ENCODE measurements at regions of chr4 and their contacts with region 1.

Region 1: GRCh38 chr4:108570993-108571569 is 49.3 kb upstream of the RPL34 start:
- DNase-seq: no peak
- ATAC-seq: no peak
- H3K4me3 ChIP-seq: no peak overlapping the region
- H3K4me3 Mint-ChIP-seq: no peak overlapping the region
- H3K27ac ChIP-seq: no peak overlapping the region
- H3K27ac Mint-ChIP-seq: peak overlapping the region in 5 of 9 donors; percentile 0 to 74 (median 28)
- H3K4me1 ChIP-seq: peaks cover 0 to 11% of the 10 kb centered on the region in 2 donors
- H3K4me1 Mint-ChIP-seq: peaks cover 13 to 44% (median 32%) of the 10 kb centered on the region in 7 donors
- H3K27me3 ChIP-seq: no peaks in the 10 kb centered on the region
- H3K27me3 Mint-ChIP-seq: no peaks in the 10 kb centered on the region

Region 2: DNA sequence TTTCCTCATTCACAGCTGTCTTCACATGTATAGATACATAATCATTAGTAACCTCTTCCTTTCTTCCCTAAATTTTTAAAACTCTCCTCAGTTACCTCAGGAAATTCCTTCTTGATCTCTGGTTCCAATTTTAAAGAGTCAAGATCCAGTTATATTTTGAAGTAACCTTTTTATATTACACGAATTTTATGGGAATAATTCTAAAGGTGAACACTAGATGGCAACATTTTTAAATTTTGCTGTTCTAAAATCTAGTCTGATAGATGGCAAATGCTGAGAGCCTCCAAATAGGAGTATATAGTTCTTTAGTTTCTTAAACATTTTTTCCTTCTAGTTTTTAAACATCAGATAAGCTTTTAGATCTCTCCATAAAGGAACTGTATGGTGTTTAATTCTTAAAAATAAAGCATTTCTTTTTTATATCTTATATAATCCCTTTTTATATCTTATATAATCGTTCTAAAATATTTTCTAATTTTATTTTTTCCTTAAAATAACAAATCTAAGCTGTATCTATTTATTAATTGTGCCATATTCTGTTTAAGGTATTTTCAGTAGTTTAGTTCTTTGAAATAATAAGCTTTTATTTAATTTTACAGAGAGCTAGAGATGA is 813.1 kb before region 1 on chr4:
- CTCF ChIA-PET with region 1: no interaction called
- POLR2A ChIA-PET with region 1: no interaction called
- intact Hi-C with region 1: loop called in 1 of 2 experiments (anchors 2 kb)
- DNase-seq: peak in 5 of 9 donors; percentile 14 to 40 (median 23)
- ATAC-seq: peak; percentile 56
- H3K4me3 ChIP-seq: no peak overlapping the region
- H3K4me3 Mint-ChIP-seq: no peak overlapping the region
- H3K27ac ChIP-seq: no peak overlapping the region
- H3K27ac Mint-ChIP-seq: no peak overlapping the region
- H3K4me1 ChIP-seq: no peaks in the 10 kb centered on the region
- H3K4me1 Mint-ChIP-seq: peaks cover 0 to 5% (median 0%) of the 10 kb centered on the region in 7 donors
- H3K27me3 ChIP-seq: no peaks in the 10 kb centered on the region
- H3K27me3 Mint-ChIP-seq: peaks cover under 1 to 15% (median 10%) of the 10 kb centered on the region in 5 donors

Region 3: DNA sequence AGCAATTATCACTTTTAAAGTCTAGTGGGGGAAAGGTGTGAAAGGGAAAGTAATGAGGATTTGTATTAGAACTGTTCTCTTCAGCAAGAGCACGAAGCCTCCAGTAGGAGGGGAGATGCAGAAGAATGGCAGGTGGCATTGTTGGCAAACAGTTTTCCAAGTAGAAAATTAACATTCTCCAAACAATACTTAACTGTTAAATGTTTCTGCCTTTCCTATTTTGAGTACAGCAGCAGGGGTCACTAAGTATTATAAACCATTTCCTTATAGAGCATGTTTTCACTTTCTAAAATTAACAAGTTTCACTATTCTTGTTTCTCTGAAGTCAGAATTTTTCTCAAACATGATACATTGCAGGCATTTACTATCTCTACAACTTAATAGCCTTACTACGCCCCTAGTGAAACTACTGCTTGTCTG is 461.1 kb before region 1 on chr4:
- CTCF ChIA-PET with region 1: interaction called, 3 read pairs
- POLR2A ChIA-PET with region 1: no interaction called
- intact Hi-C with region 1: loop called in 1 of 2 experiments (anchors 2 kb)
- DNase-seq: no peak
- ATAC-seq: no peak
- H3K4me3 ChIP-seq: peak overlapping the region; percentile 7
- H3K4me3 Mint-ChIP-seq: peak overlapping the region; percentile 69 to 89 (median 78)
- H3K27ac ChIP-seq: peak overlapping the region; percentile 80
- H3K27ac Mint-ChIP-seq: peak overlapping the region; percentile 84 to 98 (median 90)
- H3K4me1 ChIP-seq: peaks cover 72 to 98% of the 10 kb centered on the region in 2 donors
- H3K4me1 Mint-ChIP-seq: peaks cover 70 to 97% (median 95%) of the 10 kb centered on the region in 7 donors
- H3K27me3 ChIP-seq: no peaks in the 10 kb centered on the region
- H3K27me3 Mint-ChIP-seq: no peaks in the 10 kb centered on the region

Region 4: DNA sequence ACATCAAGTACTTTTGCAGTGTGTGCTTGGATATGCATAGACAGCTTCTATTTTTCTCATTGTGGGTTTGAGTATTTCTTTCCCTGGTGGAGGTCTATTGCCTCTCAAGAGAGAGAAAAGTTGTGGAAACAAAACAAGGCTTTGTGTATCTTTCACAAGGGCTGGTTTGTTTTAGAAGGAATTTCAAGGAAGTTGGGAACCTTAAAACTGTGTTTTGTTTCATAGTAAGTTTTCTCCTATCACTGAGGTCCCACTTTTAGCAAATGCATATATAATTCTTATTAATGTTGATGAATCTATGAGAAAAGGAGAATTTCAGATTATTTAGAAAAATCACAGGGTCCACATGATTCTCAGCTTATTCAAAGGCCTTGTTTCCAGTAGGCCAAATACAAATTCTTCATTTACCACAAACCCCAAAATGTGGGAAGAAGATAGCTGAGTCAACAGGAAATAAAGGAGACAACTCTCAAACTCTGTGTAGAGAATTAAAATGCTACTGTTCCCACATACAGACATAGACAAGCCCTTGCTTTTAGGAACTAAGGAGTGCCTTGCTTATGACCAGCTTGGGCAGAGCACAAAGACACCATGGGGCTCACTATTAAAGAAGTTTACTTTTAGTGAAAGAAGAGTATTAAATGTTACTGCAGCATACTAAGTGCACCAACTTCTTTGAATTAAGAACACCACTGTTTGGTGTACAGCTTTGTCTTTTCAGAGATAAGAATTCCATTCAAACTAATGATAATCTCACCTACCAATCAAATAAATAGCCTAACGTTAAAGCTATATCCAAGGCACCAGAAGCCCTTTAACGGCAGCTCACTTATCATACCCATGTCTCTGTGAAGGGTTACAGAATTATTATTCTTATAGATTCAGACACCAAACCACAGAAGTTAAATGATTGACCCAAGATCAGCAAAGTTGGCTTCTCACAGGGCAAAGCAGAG is 224.9 kb before region 1 on chr4:
- CTCF ChIA-PET with region 1: interaction called, 4 read pairs
- POLR2A ChIA-PET with region 1: no interaction called
- intact Hi-C with region 1: loop called in 1 of 2 experiments (anchors 1 kb)
- DNase-seq: no peak
- ATAC-seq: no peak
- H3K4me3 ChIP-seq: no peak overlapping the region
- H3K4me3 Mint-ChIP-seq: peak overlapping the region in 2 of 10 donors; percentile 41 to 46
- H3K27ac ChIP-seq: no peak overlapping the region
- H3K27ac Mint-ChIP-seq: peak overlapping the region in 5 of 9 donors; percentile 7 to 94 (median 39)
- H3K4me1 ChIP-seq: peaks cover 12 to 37% of the 10 kb centered on the region in 2 donors
- H3K4me1 Mint-ChIP-seq: peaks cover 31 to 76% (median 51%) of the 10 kb centered on the region in 7 donors
- H3K27me3 ChIP-seq: no peaks in the 10 kb centered on the region
- H3K27me3 Mint-ChIP-seq: peaks cover 0 to 5% (median 0%) of the 10 kb centered on the region in 5 donors

Region 5: GRCh38 chr4:108512615-108513505 is 58.2 kb before region 1 on chr4:
- CTCF ChIA-PET with region 1: interaction called, 5 read pairs
- POLR2A ChIA-PET with region 1: no interaction called
- intact Hi-C with region 1: loop called (anchors 1 kb)
- DNase-seq: peak in 7 of 9 donors; percentile 42 to 68 (median 58)
- ATAC-seq: peak; percentile 82
- H3K4me3 ChIP-seq: peak overlapping the region; percentile 6
- H3K4me3 Mint-ChIP-seq: peak overlapping the region; percentile 72 to 87 (median 80)
- H3K27ac ChIP-seq: no peak overlapping the region
- H3K27ac Mint-ChIP-seq: peak overlapping the region in 7 of 9 donors; percentile 33 to 79 (median 71)
- H3K4me1 ChIP-seq: peaks cover 0 to 10% of the 10 kb centered on the region in 2 donors
- H3K4me1 Mint-ChIP-seq: peaks cover 9 to 37% (median 23%) of the 10 kb centered on the region in 7 donors
- H3K27me3 ChIP-seq: no peaks in the 10 kb centered on the region
- H3K27me3 Mint-ChIP-seq: peaks cover 0 to 11% (median 0%) of the 10 kb centered on the region in 5 donors

Region 6: DNA sequence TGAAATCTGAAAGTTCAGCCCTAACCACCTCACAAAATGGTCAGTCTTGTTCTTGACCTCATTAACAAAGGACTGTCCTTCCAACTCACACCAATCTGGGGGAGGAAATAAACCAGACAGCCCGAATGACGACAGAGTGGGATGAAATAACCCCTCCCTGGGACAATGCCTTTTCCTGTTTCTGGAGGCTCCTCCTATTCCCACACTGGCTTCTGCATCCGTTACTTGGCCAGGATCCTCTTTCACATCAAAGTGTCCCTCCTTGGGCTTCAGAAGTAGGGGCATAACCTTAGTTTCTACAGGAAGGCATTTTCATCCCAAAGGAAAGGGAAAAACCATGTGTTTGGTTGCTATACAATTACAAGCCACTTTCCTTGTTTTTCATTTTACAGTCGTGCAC is 10.5 kb before region 1 on chr4:
- CTCF ChIA-PET with region 1: interaction called, 11 read pairs
- POLR2A ChIA-PET with region 1: interaction called, 4 read pairs
- intact Hi-C with region 1: no loop called
- DNase-seq: no peak
- ATAC-seq: no peak
- H3K4me3 ChIP-seq: no peak overlapping the region
- H3K4me3 Mint-ChIP-seq: no peak overlapping the region
- H3K27ac ChIP-seq: no peak overlapping the region
- H3K27ac Mint-ChIP-seq: no peak overlapping the region
- H3K4me1 ChIP-seq: no peaks in the 10 kb centered on the region
- H3K4me1 Mint-ChIP-seq: peaks cover 4 to 18% (median 14%) of the 10 kb centered on the region in 7 donors
- H3K27me3 ChIP-seq: no peaks in the 10 kb centered on the region
- H3K27me3 Mint-ChIP-seq: no peaks in the 10 kb centered on the region